Caco-2 (cell line): ENCODE measurements at regions of chr1 and their contacts with region 1.

Region 1: DNA sequence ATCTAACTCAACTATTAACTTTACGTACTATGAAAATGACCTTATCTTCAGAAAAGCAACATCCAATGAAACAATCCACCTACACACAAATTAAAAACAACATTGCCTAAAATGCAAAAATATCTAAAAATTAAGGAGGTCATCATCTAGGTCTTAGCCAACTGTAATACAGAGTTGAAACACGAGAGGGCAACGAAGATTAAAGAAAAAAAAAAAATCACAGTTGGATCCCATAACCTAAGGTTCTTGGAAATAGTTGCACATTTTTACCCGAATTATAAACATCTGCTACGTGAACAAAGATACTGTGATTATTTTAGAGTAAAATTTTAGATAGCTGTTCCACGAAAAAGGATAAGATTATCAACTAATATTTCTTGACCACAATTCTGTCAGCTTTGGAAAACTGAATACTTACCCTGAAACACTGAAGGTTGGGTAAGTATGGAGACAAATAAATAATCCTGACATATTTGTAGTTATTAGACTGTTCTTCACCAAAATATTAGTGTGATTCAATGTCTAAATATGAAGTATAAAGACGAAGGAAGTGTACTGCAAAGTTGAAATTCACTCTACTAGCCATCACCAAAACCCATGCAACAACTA is 88.0 kb upstream of the AK4 start:
- DNase-seq: no peak
- H3K4me3 ChIP-seq: no peak overlapping the region
- H3K4me3 Mint-ChIP-seq: no peak overlapping the region
- H3K27ac Mint-ChIP-seq: no peak overlapping the region
- H3K4me1 ChIP-seq: no peaks in the 10 kb centered on the region
- H3K4me1 Mint-ChIP-seq: no peaks in the 10 kb centered on the region
- H3K27me3 ChIP-seq: no peaks in the 10 kb centered on the region
- H3K27me3 Mint-ChIP-seq: no peaks in the 10 kb centered on the region
- CTCF ChIP-seq: peak; percentile 22 to 24

Region 2: GRCh38 chr1:65090403-65090802 is 30.4 kb after region 1 on chr1:
- CTCF ChIA-PET with region 1: no interaction called
- POLR2A ChIA-PET with region 1: no interaction called
- intact Hi-C with region 1: no loop called
- DNase-seq: peak; percentile 73 to 77
- H3K4me3 ChIP-seq: no peak overlapping the region
- H3K4me3 Mint-ChIP-seq: peak overlapping the region; percentile 17
- H3K27ac Mint-ChIP-seq: peak overlapping the region; percentile 73
- H3K4me1 ChIP-seq: peaks cover 19% of the 10 kb centered on the region
- H3K4me1 Mint-ChIP-seq: peaks cover 17% of the 10 kb centered on the region
- H3K27me3 ChIP-seq: no peaks in the 10 kb centered on the region
- H3K27me3 Mint-ChIP-seq: no peaks in the 10 kb centered on the region
- CTCF ChIP-seq: no peak

Region 3: DNA sequence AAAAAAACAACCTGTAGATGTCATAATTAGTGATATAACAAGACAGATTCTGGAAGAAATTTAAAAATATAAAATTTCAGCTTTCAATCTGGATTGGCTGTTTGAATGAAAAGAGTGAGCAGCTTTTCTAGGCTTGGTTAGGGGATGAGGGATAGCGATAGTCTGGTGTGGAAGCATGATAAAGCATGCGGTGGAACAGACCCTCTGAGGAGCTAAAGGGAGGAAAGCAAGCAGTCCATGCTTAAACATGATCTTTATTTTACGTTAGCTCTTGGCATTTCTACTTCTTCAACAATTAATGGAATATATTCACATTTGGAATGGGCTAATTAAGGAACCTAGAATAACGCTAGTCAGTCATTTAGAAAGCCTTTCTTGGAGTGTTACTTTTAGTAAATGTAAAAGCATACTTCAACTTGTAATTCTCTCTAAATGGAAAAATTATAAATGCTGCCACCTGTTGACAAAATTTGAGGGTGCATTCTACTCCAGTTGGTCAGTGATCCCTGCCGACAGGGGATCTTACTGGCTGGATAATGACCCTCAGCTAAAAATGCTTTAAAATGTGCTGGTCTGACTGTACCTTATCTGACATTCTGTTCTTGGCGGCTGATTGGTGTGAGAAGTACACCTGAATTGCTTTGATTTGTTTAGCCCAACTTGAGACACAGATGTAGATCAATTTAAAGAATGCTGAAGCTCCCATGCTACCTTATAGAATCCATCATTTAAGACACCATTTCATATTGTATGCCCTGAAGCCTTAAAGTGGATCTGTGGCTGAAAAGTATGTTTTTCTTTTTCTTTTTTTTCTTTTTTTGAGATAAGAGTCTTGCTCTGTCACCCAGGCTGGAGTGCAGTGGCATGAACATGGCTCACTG is 149.2 kb after region 1 on chr1:
- CTCF ChIA-PET with region 1: interaction called, 3 read pairs
- POLR2A ChIA-PET with region 1: no interaction called
- intact Hi-C with region 1: loop called (anchors 1 kb)
- DNase-seq: peak in 1 of 2 experiments; percentile 52
- H3K4me3 ChIP-seq: no peak overlapping the region
- H3K4me3 Mint-ChIP-seq: no peak overlapping the region
- H3K27ac Mint-ChIP-seq: peak overlapping the region; percentile 73
- H3K4me1 ChIP-seq: peaks cover 32% of the 10 kb centered on the region
- H3K4me1 Mint-ChIP-seq: peaks cover 34% of the 10 kb centered on the region
- H3K27me3 ChIP-seq: no peaks in the 10 kb centered on the region
- H3K27me3 Mint-ChIP-seq: no peaks in the 10 kb centered on the region
- CTCF ChIP-seq: peak; percentile 27 to 39